Activated CD4-positive, alpha-beta memory T cell treated with anti-CD3 and anti-CD28 coated beads for 36 hours (primary cell): ENCODE measurements at regions of chr18 and their contacts with region 1.

Region 1: GRCh38 chr18:12327510-12328178 is 19.6 kb downstream of the TUBB6 start:
- DNase-seq: peak; percentile 86
- H3K4me3 Mint-ChIP-seq: no peak overlapping the region
- H3K27ac Mint-ChIP-seq: no peak overlapping the region
- H3K4me1 Mint-ChIP-seq: peaks cover 5% of the 10 kb centered on the region
- H3K27me3 Mint-ChIP-seq: no peaks in the 10 kb centered on the region

Region 2: DNA sequence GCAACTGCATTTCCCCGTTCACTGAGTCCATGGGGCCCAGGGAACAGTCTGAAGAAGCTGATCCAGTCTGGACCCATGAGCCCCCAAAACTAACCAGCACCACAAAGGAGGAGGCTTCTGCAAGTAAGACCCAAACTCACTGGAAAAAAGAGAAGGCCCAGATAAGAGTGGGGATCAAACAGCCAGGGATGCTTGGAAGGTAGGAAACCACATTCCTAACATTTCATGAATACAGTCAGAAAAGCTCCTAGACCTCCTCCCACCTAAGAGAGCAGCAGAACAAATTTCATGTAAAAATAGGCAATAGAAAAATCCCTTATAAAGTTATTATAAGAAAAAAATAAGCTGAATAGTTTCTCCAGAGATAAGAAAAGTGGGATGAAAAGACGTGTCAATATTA is 10.7 kb after region 1 on chr18:
- CTCF ChIA-PET with region 1: interaction called, 19 read pairs
- POLR2A ChIA-PET with region 1: no interaction called
- intact Hi-C with region 1: no loop called
- DNase-seq: no peak
- H3K4me3 Mint-ChIP-seq: no peak overlapping the region
- H3K27ac Mint-ChIP-seq: no peak overlapping the region
- H3K4me1 Mint-ChIP-seq: no peaks in the 10 kb centered on the region
- H3K27me3 Mint-ChIP-seq: no peaks in the 10 kb centered on the region

Region 3: DNA sequence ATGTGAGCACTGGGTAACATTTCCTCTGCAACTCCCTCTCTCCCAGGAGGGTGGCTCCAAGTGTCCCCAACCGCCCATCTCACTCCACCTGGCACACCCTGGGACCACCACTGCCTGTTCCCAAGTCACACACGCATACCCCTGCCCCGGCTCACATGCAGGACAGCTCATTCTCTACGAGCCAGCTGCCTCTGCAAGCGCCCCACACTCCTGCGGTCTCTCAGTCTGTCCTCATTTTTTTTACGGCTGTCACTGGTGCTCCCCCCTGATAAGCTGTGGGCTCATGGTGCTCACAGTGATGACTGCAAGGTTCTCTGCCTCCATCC is 18.6 kb after region 1 on chr18:
- CTCF ChIA-PET with region 1: interaction called, 13 read pairs
- POLR2A ChIA-PET with region 1: interaction called, 4 read pairs
- intact Hi-C with region 1: no loop called
- DNase-seq: no peak
- H3K4me3 Mint-ChIP-seq: no peak overlapping the region
- H3K27ac Mint-ChIP-seq: no peak overlapping the region
- H3K4me1 Mint-ChIP-seq: no peaks in the 10 kb centered on the region
- H3K27me3 Mint-ChIP-seq: no peaks in the 10 kb centered on the region

Region 4: DNA sequence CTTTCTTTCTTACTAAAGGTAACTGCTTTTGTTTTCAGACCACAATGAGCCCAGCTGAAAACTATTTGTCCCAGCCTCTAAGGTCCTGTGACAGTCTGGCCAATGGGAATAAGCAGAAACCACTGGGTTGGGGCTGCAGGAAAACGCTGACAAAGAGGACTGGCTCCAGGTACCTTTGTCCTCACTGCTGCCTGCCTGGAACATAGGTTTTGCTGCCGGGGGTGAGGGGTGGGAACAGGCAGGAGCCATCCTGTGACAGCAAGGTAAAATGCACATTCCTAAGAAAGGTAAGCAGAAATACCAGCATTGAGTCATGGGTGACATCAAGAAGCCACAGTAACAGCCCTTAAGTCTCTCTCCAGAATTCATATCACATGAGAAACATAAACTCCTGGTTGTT is 534.8 kb after region 1 on chr18:
- CTCF ChIA-PET with region 1: no interaction called
- POLR2A ChIA-PET with region 1: no interaction called
- intact Hi-C with region 1: no loop called
- DNase-seq: no peak
- H3K4me3 Mint-ChIP-seq: no peak overlapping the region
- H3K27ac Mint-ChIP-seq: peak overlapping the region; percentile 49
- H3K4me1 Mint-ChIP-seq: peaks cover 48% of the 10 kb centered on the region
- H3K27me3 Mint-ChIP-seq: no peaks in the 10 kb centered on the region

Region 5: GRCh38 chr18:13558124-13558523 is 1230.5 kb after region 1 on chr18:
- CTCF ChIA-PET with region 1: no interaction called
- POLR2A ChIA-PET with region 1: no interaction called
- intact Hi-C with region 1: no loop called
- DNase-seq: peak; percentile 43
- H3K4me3 Mint-ChIP-seq: no peak overlapping the region
- H3K27ac Mint-ChIP-seq: no peak overlapping the region
- H3K4me1 Mint-ChIP-seq: peaks cover 38% of the 10 kb centered on the region
- H3K27me3 Mint-ChIP-seq: no peaks in the 10 kb centered on the region